ENCODE measurements at regions of chr4 and their contacts with region 1.

Region 1: DNA sequence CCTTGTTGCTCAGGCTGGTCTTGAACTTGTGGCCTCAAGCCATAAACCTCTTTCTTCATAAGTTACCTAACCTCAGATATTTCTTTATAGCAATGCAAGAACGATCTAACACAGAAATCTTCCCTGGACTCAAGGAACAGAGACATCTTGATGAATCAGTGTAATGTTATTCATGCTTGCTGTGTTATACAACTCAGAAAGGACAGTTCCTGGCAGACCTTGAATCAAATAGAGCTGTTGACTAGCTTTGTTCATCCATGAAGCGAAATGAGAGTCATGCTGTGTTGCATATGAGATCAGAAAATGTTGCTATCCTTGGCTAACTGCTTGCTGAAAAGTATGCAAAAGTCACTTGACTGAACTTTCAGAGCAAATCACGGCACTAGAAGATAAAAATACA is 72.6 kb upstream of the ARHGAP24 start:
- DNase-seq: no peak
- H3K4me3 ChIP-seq: no peak overlapping the region
- H3K27ac ChIP-seq: no peak overlapping the region
- H3K4me1 ChIP-seq: no peaks in the 10 kb centered on the region
- H3K27me3 ChIP-seq: no peaks in the 10 kb centered on the region
- CTCF ChIP-seq: no peak
- EP300 ChIP-seq: no peak
- POLR2A ChIP-seq: no peak

Region 2: GRCh38 chr4:85573270-85573669 is 170.9 kb after region 1 on chr4:
- in situ Hi-C with region 1: no loop called
- intact Hi-C with region 1: no loop called
- DNase-seq: no peak
- H3K4me3 ChIP-seq: no peak overlapping the region
- H3K27ac ChIP-seq: no peak overlapping the region
- H3K4me1 ChIP-seq: no peaks in the 10 kb centered on the region
- H3K27me3 ChIP-seq: no peaks in the 10 kb centered on the region
- CTCF ChIP-seq: no peak
- EP300 ChIP-seq: no peak
- POLR2A ChIP-seq: no peak

Region 3: DNA sequence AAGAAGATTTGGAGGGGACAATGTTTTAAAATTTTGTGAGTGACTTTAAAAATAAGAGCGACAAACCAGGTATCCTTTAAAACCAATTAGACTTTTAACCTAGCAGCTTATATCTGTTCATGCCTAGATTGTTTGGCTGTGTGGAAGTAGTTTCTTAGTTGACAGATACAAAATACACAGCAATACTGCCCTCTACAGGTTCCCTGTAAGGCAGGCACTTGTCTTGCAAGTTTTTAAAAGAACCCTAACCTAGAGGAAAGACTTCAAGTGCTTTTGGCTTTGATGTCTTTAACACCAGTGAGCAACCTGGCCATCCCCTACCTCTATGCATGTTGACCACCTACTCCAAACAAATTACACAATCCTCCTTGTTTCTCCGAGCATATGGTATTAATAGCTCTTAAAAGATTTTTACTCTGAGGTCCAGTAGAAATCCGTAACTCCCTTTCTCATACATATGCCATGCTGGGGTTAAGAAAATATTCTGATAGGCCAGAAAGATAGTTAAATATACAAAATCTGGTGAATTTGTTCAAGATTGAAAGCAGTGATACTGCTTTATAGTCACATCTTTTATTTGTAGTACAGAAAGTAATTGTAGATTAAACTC is 345.6 kb after region 1 on chr4:
- in situ Hi-C with region 1: loop called in 1 of 4 experiments (anchors 25 kb)
- intact Hi-C with region 1: no loop called
- DNase-seq: peak; percentile 15
- H3K4me3 ChIP-seq: no peak overlapping the region
- H3K27ac ChIP-seq: no peak overlapping the region
- H3K4me1 ChIP-seq: peaks cover 0 to 20% (median 0%) of the 10 kb centered on the region in 4 donors
- H3K27me3 ChIP-seq: no peaks in the 10 kb centered on the region
- CTCF ChIP-seq: peak; percentile 77 to 85 (median 80)
- EP300 ChIP-seq: no peak
- POLR2A ChIP-seq: no peak